T-cell (primary cell): ENCODE measurements at regions of chr18 and their contacts with region 1.

Region 1: GRCh38 chr18:66676699-66677098 is 72.8 kb upstream of the CDH19 start:
- DNase-seq: no peak
- ATAC-seq: no peak
- H3K4me3 ChIP-seq: no peak overlapping the region
- H3K4me3 Mint-ChIP-seq: no peak overlapping the region
- H3K27ac ChIP-seq: no peak overlapping the region
- H3K27ac Mint-ChIP-seq: no peak overlapping the region
- H3K4me1 ChIP-seq: no peaks in the 10 kb centered on the region
- H3K4me1 Mint-ChIP-seq: no peaks in the 10 kb centered on the region
- H3K27me3 ChIP-seq: no peaks in the 10 kb centered on the region
- H3K27me3 Mint-ChIP-seq: no peaks in the 10 kb centered on the region

Region 2: DNA sequence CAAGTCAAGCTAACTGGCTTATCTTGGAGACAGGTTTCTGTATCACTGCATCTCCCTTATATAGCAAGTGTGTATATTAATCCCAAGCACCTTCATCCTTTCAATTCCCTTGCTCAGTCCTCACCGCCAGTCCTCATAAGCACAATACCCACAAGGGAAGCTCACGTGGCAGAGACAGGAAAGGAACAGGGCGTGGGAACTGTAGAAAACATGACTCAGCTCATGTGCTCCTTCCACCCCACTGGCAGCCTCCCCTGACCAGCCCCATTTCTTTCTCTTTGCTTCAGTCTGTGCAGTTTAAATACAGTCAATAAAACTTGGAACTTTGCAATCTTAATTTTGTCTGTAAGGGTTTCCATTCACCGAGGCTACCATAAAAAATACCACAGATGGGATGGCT is 36.3 kb before region 1 on chr18:
- CTCF ChIA-PET with region 1: no interaction called
- POLR2A ChIA-PET with region 1: no interaction called
- DNase-seq: no peak
- ATAC-seq: no peak
- H3K4me3 ChIP-seq: no peak overlapping the region
- H3K4me3 Mint-ChIP-seq: no peak overlapping the region
- H3K27ac ChIP-seq: no peak overlapping the region
- H3K27ac Mint-ChIP-seq: no peak overlapping the region
- H3K4me1 ChIP-seq: no peaks in the 10 kb centered on the region
- H3K4me1 Mint-ChIP-seq: no peaks in the 10 kb centered on the region
- H3K27me3 ChIP-seq: no peaks in the 10 kb centered on the region
- H3K27me3 Mint-ChIP-seq: no peaks in the 10 kb centered on the region

Region 3: GRCh38 chr18:66742832-66743231 is 66.1 kb after region 1 on chr18:
- CTCF ChIA-PET with region 1: no interaction called
- POLR2A ChIA-PET with region 1: no interaction called
- DNase-seq: no peak
- ATAC-seq: no peak
- H3K4me3 ChIP-seq: no peak overlapping the region
- H3K4me3 Mint-ChIP-seq: no peak overlapping the region
- H3K27ac ChIP-seq: no peak overlapping the region
- H3K27ac Mint-ChIP-seq: no peak overlapping the region
- H3K4me1 ChIP-seq: no peaks in the 10 kb centered on the region
- H3K4me1 Mint-ChIP-seq: no peaks in the 10 kb centered on the region
- H3K27me3 ChIP-seq: no peaks in the 10 kb centered on the region
- H3K27me3 Mint-ChIP-seq: no peaks in the 10 kb centered on the region

Region 4: GRCh38 chr18:67035026-67035425 is 358.3 kb after region 1 on chr18:
- CTCF ChIA-PET with region 1: no interaction called
- POLR2A ChIA-PET with region 1: interaction called in 1 of 2 experiments, 12 read pairs
- DNase-seq: no peak
- ATAC-seq: no peak
- H3K4me3 ChIP-seq: no peak overlapping the region
- H3K4me3 Mint-ChIP-seq: no peak overlapping the region
- H3K27ac ChIP-seq: no peak overlapping the region
- H3K27ac Mint-ChIP-seq: no peak overlapping the region
- H3K4me1 ChIP-seq: no peaks in the 10 kb centered on the region
- H3K4me1 Mint-ChIP-seq: no peaks in the 10 kb centered on the region
- H3K27me3 ChIP-seq: no peaks in the 10 kb centered on the region
- H3K27me3 Mint-ChIP-seq: no peaks in the 10 kb centered on the region